A549 (cell line): ENCODE measurements at regions of chr15 and their contacts with region 1.

Region 1: DNA sequence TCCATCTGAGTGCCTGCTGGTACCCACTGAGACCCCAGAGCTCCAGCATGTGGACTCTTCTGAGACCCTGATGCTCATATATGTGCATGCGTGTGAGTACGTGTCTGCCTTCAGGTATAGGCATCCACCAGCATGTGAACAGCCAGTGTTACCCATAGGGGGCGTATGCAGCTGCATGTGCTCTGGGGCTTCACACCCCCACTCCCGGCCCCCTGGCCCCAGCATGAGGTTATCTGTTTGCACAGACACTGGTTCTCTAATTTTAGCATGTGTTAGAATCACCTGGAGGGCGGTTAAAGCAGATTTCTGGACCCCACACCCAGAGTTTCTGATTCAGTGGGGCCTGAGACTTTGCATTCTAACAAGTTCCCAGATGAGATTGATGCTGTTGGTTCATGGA is 824 bp upstream of the CILP start:
- DNase-seq: peak; percentile 48 to 54
- ATAC-seq: peak; percentile 44 to 78; a peak in 3 of 6 replicates
- H3K4me3 ChIP-seq: no peak overlapping the region
- H3K27ac ChIP-seq: no peak overlapping the region
- H3K4me1 ChIP-seq: peaks cover 7% of the 10 kb centered on the region; the same call in 1 of the 3 replicates
- CTCF ChIP-seq: peak; percentile 48
- EP300 ChIP-seq: no peak
- POLR2A ChIP-seq: no peak
- RAD21 ChIP-seq: peak in 1 of 2 experiments; percentile 40; a peak in 2 of 5 replicates

Region 2: DNA sequence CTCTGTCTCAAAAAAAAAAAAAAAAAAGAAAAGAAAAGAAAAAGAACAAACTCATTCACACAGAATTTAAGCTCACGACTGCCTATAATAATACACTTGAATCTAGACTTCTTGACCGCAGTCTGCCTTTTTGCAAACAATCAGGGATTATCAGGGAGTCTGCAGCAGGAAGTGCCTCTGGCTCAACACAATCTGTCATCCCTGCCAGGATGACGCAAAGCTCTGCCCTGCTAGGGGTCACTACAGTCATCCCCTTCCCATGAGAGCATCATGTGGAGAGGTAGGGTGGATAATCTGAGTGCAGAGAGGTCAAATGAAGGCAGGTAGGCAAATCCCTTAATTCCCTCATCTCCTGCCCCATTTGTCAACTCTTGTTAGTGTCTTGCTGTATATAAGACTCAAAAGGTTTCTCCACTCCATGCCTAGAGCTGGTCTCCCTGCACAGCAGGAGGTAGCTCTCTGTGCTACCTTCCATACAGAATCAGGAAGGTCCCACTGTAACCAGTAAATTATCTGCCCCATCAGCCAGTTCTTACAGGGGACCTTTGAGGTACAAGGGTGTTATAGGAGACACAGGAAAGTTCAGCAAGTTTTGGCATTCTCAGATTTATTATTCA is 101.3 kb before region 1 on chr15:
- CTCF ChIA-PET with region 1: no interaction called
- POLR2A ChIA-PET with region 1: no interaction called
- DNase-seq: no peak
- ATAC-seq: peak in 1 of 2 experiments; percentile 43; a peak in 2 of 6 replicates
- H3K4me3 ChIP-seq: no peak overlapping the region
- H3K27ac ChIP-seq: no peak overlapping the region
- H3K4me1 ChIP-seq: no peaks in the 10 kb centered on the region
- CTCF ChIP-seq: no peak
- EP300 ChIP-seq: no peak
- POLR2A ChIP-seq: no peak
- RAD21 ChIP-seq: no peak

Region 3: DNA sequence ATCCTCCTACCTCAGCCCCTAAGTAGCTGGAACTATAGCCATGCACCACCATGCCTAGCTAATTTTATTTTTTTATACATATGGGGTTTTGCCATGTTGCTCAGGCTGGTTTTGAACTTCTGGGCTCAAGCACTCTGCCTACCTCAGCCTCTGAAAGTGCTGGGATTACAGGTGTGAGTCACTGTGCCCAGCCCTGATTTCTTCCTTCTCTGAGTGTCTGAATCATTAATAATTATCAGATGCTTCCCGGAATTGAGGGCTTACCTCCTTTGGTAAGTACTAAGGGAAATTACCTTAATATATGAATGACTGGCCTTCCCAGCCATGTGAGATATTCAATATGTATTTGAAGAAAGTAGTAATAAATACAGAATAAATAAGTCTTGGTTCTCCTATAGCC is 34.2 kb before region 1 on chr15:
- CTCF ChIA-PET with region 1: no interaction called
- POLR2A ChIA-PET with region 1: no interaction called
- DNase-seq: peak in 1 of 2 experiments; percentile 47
- ATAC-seq: peak in 1 of 2 experiments; percentile 46; a peak in 2 of 6 replicates
- H3K4me3 ChIP-seq: no peak overlapping the region
- H3K27ac ChIP-seq: no peak overlapping the region
- H3K4me1 ChIP-seq: peaks cover 54% of the 10 kb centered on the region
- CTCF ChIP-seq: no peak
- EP300 ChIP-seq: no peak
- POLR2A ChIP-seq: no peak
- RAD21 ChIP-seq: no peak

Region 4: DNA sequence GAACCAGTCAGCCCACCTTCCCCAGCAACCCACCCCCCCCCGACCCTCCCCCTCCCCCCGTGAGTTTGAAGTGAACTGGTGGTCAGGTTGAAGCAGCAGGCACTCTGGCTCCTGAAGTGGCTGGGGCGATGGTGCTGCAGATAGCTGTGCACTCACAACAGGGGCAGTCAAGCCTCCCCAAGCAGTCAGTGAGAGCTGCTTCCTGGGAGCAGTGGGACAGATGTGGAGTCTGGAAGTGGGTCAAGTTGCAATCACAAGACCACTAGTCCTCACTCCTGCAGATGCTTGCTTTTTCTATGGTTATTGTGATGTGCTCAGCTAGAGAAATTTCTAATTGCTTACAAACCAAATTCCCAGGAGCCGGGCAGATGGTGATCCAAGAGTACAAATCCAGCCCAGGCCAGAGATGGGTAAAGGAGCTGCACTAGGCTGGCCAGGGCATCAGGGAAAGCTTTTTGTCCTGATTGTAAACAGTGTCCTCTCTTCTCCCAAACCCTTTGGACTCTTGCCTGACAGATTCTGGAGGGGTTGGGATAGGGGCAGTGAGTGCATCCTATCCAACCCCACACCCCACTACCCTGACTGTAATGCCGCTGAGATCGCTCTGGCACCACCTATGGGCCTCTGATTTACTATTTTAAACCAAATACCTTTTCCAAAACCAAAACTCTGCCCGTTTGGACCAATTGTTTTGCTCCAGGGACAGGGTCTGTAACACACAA is 17.1 kb before region 1 on chr15:
- CTCF ChIA-PET with region 1: interaction called, 20 read pairs
- POLR2A ChIA-PET with region 1: interaction called, 3 read pairs
- DNase-seq: no peak
- ATAC-seq: peak; percentile 30 to 39; a peak in 2 of 6 replicates
- H3K4me3 ChIP-seq: no peak overlapping the region
- H3K27ac ChIP-seq: no peak overlapping the region
- H3K4me1 ChIP-seq: peaks cover 3% of the 10 kb centered on the region; the same call in 1 of the 3 replicates
- CTCF ChIP-seq: no peak
- EP300 ChIP-seq: no peak
- POLR2A ChIP-seq: no peak
- RAD21 ChIP-seq: no peak